Ascending aorta (tissue), 2 donors: ENCODE measurements at regions of chr22 and their contacts with region 1.

Region 1: DNA sequence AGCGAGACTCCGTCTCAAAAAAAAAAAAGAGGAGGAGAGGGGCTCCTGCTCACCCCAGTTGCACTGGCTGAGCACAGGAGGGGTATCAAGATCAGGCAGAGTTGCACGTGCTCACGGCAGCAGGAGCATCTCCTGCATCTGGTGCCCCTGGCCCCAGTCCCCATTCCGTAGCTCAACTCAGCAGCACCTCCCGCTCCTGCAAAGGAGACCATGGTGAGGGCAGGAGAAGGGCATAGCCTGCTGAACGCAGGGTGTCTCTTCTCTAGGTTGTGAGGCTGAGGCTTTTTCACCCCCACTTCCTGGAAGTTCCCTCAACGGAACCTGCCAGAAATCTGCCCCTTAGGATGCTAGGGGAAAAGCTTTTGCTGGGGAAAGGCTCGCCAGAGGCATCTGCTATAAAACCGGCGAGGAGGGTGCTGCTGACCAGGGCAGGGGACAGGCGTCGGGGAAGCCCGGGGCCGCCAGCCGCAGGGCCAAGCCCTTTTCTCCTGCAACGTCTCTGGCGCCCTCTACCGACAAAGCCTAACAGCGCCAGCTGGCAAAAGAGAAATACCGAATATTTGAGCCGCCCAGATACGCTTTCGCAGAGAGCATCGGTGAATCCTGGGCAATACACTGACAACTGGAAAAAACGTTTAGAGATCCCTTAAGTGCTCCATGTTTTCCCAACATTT is 1.0 kb upstream of the PPP6R2 start:
- DNase-seq: peak in 1 of 2 donors; percentile 94
- H3K4me3 ChIP-seq: peak overlapping the region; percentile 81 to 100
- H3K27ac ChIP-seq: no peak overlapping the region
- H3K4me1 ChIP-seq: peaks cover 3 to 4% of the 10 kb centered on the region in 2 donors
- H3K27me3 ChIP-seq: no peaks in the 10 kb centered on the region
- CTCF ChIP-seq: peak; percentile 91 to 98 (median 97)

Region 2: GRCh38 chr22:50244420-50245213 is 97.5 kb before region 1 on chr22 and contains the start of gene TUBGCP6:
- intact Hi-C with region 1: loop called (anchors 2 kb)
- DNase-seq: peak; percentile 63 to 98
- H3K4me3 ChIP-seq: peak within 1 kb of the TSS; percentile 70 to 91
- H3K27ac ChIP-seq: peak within 1 kb of the TSS; percentile 92 to 95
- H3K4me1 ChIP-seq: peaks cover 14 to 35% of the 10 kb centered on the region in 2 donors
- H3K27me3 ChIP-seq: no peaks in the 10 kb centered on the region
- CTCF ChIP-seq: peak in 1 of 3 experiments; percentile 11
- total RNA-seq, gene TUBGCP6: 58.1 TPM

Region 3: GRCh38 chr22:50252081-50253045 is 89.8 kb before region 1 on chr22:
- intact Hi-C with region 1: loop called (anchors 1 kb)
- DNase-seq: peak in 1 of 2 donors; percentile 88
- H3K4me3 ChIP-seq: peak overlapping the region in 1 of 2 donors; percentile 82
- H3K27ac ChIP-seq: peak overlapping the region; percentile 66 to 71
- H3K4me1 ChIP-seq: peaks cover 11 to 19% of the 10 kb centered on the region in 2 donors
- H3K27me3 ChIP-seq: no peaks in the 10 kb centered on the region
- CTCF ChIP-seq: peak; percentile 60 to 74 (median 70)

Region 4: GRCh38 chr22:50276143-50276542 is 66.0 kb before region 1 on chr22:
- intact Hi-C with region 1: loop called (anchors 2 kb)
- DNase-seq: peak in 1 of 2 donors; percentile 74
- H3K4me3 ChIP-seq: no peak overlapping the region
- H3K27ac ChIP-seq: no peak overlapping the region
- H3K4me1 ChIP-seq: peaks cover 5 to 9% of the 10 kb centered on the region in 2 donors
- H3K27me3 ChIP-seq: no peaks in the 10 kb centered on the region
- CTCF ChIP-seq: peak in 2 of 3 experiments; percentile 55 to 64